ENCODE measurements at regions of chr6 and their contacts with region 1.

Region 1: DNA sequence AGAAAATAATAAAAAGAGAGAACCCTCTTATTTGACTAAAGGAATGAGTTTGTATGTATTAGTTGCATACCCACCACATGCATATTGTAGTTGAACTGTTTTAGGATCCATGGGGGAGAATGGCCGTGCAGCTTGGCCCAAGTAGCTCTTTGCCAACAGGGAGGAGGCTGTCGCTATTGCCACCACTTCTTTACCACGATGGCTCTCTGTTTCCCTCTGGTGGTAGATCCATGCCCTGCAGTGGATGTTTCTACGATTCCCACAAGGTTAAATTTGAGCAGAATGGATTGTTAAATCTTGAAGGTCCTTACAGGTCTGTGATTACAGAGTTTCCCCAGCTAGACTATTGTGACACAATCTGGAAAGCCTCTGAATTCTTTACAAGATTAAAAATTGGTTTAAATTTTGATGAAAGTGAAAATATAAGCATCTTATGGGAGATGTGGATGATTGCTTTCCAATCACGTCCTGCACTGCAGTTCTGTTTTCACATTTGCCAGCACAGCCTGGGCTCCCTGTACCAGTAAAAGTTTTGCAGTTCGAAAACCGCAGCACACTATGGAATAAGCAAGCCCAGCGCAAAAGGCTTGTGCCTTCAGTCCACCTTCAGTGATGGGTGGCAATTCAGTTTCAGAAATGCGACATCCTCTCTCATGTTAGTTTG is 34.4 kb upstream of the FNDC1 start:
- DNase-seq: peak; percentile 89
- ATAC-seq: peak; percentile 97
- H3K4me3 ChIP-seq: peak overlapping the region in 3 of 5 experiments; percentile 27 to 45 (median 28)
- H3K4me3 Mint-ChIP-seq: peak overlapping the region; percentile 66
- H3K27ac ChIP-seq: peak overlapping the region; percentile 39 to 42
- H3K27ac Mint-ChIP-seq: peak overlapping the region; percentile 76
- H3K4me1 ChIP-seq: peaks cover 12 to 16% of the 10 kb centered on the region in 2 donors
- H3K4me1 Mint-ChIP-seq: peaks cover 22% of the 10 kb centered on the region
- H3K27me3 ChIP-seq: no peaks in the 10 kb centered on the region
- H3K27me3 Mint-ChIP-seq: no peaks in the 10 kb centered on the region
- CTCF ChIP-seq: peak; percentile 98

Region 2: DNA sequence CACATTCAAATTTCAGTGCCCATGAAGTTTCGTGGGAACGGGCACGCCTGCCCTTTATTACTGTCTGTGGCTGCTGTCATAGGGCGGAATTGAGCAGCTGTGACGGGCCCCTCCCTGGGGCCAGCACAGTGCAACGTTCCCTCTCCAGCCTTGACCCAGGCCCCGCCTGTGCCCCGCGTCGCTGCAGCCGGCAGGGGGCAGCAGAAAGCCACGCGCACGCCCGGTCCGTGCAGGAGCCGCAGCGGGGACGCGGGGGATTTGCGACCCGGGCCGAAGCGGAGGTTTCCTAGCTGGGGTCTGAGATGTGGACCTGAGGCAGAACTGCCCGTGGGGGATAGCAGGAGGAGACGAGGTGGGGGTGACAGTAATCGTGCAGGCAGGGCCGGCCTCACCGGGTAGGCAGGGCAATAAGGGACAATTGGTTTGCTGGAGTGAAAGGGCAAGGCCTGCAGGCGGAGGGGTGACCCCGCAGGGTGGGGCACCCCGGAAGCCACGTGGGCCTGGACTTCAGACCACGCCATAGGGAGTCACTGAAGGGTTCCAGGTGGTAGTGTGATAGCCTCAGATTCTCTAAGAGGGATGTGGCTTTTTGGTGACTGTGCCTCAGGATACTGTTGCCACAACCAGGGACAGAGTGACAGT is 430.5 kb before region 1 on chr6:
- CTCF ChIA-PET with region 1: interaction called, 6 read pairs
- POLR2A ChIA-PET with region 1: no interaction called
- intact Hi-C with region 1: loop called (anchors 1 kb)
- DNase-seq: peak; percentile 90
- ATAC-seq: peak; percentile 98
- H3K4me3 ChIP-seq: peak overlapping the region in 4 of 5 experiments; percentile 33 to 59 (median 52)
- H3K4me3 Mint-ChIP-seq: peak overlapping the region; percentile 92
- H3K27ac ChIP-seq: peak overlapping the region in 1 of 2 donors; percentile 36
- H3K27ac Mint-ChIP-seq: peak overlapping the region; percentile 89
- H3K4me1 ChIP-seq: peaks cover 19 to 30% of the 10 kb centered on the region in 2 donors
- H3K4me1 Mint-ChIP-seq: peaks cover 27% of the 10 kb centered on the region
- H3K27me3 ChIP-seq: no peaks in the 10 kb centered on the region
- H3K27me3 Mint-ChIP-seq: no peaks in the 10 kb centered on the region
- CTCF ChIP-seq: peak; percentile 99

Region 3: DNA sequence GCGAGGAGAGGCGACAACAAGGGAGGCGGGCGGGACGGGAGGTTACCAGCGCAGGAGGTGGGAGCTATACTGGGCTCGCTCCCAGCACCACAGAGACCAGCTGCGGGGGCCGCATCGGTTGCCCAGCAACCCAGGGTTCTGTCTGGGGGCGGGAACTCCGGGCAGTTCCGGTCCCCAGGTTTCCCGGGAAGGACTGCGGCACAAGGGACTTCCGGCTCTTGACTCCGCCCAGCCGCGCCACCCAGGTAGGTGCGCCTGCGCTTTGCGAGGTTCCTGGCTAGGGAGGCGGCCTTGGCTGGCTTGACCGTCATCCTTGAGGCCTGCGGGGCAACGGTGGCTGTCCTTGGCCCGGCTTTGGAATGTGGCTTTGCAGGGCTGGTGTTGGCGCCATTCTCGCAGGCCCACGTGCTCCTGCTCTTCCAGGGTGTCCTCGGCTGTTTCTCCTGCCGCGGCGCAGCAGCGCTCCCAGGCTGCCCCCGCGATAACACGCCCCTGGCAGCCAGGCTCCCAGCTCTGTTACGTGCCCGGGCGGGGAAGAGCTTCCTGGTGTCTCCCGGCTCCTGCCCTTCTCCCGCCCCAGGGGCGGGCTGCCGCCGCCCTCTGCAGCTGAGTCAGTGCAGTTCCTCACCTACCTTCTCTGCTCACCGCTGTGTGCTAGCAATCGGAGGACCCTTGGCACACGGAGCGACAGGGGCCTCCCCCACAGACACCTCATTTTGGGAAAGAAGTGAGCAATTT is 135.0 kb before region 1 on chr6 and contains the start of gene RSPH3:
- CTCF ChIA-PET with region 1: interaction called, 728 read pairs
- POLR2A ChIA-PET with region 1: no interaction called
- intact Hi-C with region 1: no loop called
- DNase-seq: peak; percentile 90
- ATAC-seq: peak; percentile 94
- H3K4me3 ChIP-seq: peak within 1 kb of the TSS; percentile 51 to 95 (median 86)
- H3K4me3 Mint-ChIP-seq: peak within 1 kb of the TSS; percentile 97
- H3K27ac ChIP-seq: peak within 1 kb of the TSS; percentile 60 to 63
- H3K27ac Mint-ChIP-seq: peak within 1 kb of the TSS; percentile 93
- H3K4me1 ChIP-seq: peaks cover 11 to 17% of the 10 kb centered on the region in 2 donors
- H3K4me1 Mint-ChIP-seq: peaks cover 20% of the 10 kb centered on the region
- H3K27me3 ChIP-seq: no peaks in the 10 kb centered on the region
- H3K27me3 Mint-ChIP-seq: no peaks in the 10 kb centered on the region
- CTCF ChIP-seq: no peak
- total RNA-seq, gene RSPH3: 2.9 and 3.4 TPM in 2 replicates

Region 4: GRCh38 chr6:159008656-159009288 is 126.1 kb before region 1 on chr6:
- CTCF ChIA-PET with region 1: interaction called, 728 read pairs
- POLR2A ChIA-PET with region 1: interaction called, 12 read pairs
- intact Hi-C with region 1: loop called (anchors 1 kb)
- DNase-seq: peak; percentile 78
- ATAC-seq: peak; percentile 82
- H3K4me3 ChIP-seq: peak overlapping the region in 2 of 5 experiments; percentile 26 to 48
- H3K4me3 Mint-ChIP-seq: peak overlapping the region; percentile 38
- H3K27ac ChIP-seq: no peak overlapping the region
- H3K27ac Mint-ChIP-seq: peak overlapping the region; percentile 32
- H3K4me1 ChIP-seq: peaks cover 17 to 25% of the 10 kb centered on the region in 2 donors
- H3K4me1 Mint-ChIP-seq: peaks cover 39% of the 10 kb centered on the region
- H3K27me3 ChIP-seq: no peaks in the 10 kb centered on the region
- H3K27me3 Mint-ChIP-seq: no peaks in the 10 kb centered on the region
- CTCF ChIP-seq: peak; percentile 79

Region 5: GRCh38 chr6:159033160-159034049 is 101.4 kb before region 1 on chr6:
- CTCF ChIA-PET with region 1: interaction called, 164 read pairs
- POLR2A ChIA-PET with region 1: no interaction called
- intact Hi-C with region 1: no loop called
- DNase-seq: no peak
- ATAC-seq: peak; percentile 14
- H3K4me3 ChIP-seq: no peak overlapping the region
- H3K4me3 Mint-ChIP-seq: no peak overlapping the region
- H3K27ac ChIP-seq: peak overlapping the region in 1 of 2 donors; percentile 50
- H3K27ac Mint-ChIP-seq: peak overlapping the region; percentile 44
- H3K4me1 ChIP-seq: peaks cover 16 to 35% of the 10 kb centered on the region in 2 donors
- H3K4me1 Mint-ChIP-seq: peaks cover 28% of the 10 kb centered on the region
- H3K27me3 ChIP-seq: no peaks in the 10 kb centered on the region
- H3K27me3 Mint-ChIP-seq: no peaks in the 10 kb centered on the region
- CTCF ChIP-seq: no peak

Region 6: GRCh38 chr6:159084493-159085091 is 50.2 kb before region 1 on chr6:
- CTCF ChIA-PET with region 1: interaction called, 15 read pairs
- POLR2A ChIA-PET with region 1: no interaction called
- intact Hi-C with region 1: no loop called
- DNase-seq: no peak
- ATAC-seq: no peak
- H3K4me3 ChIP-seq: no peak overlapping the region
- H3K4me3 Mint-ChIP-seq: no peak overlapping the region
- H3K27ac ChIP-seq: no peak overlapping the region
- H3K27ac Mint-ChIP-seq: no peak overlapping the region
- H3K4me1 ChIP-seq: peaks cover 32 to 33% of the 10 kb centered on the region in 2 donors
- H3K4me1 Mint-ChIP-seq: peaks cover 27% of the 10 kb centered on the region
- H3K27me3 ChIP-seq: no peaks in the 10 kb centered on the region
- H3K27me3 Mint-ChIP-seq: no peaks in the 10 kb centered on the region
- CTCF ChIP-seq: no peak

Region 7: DNA sequence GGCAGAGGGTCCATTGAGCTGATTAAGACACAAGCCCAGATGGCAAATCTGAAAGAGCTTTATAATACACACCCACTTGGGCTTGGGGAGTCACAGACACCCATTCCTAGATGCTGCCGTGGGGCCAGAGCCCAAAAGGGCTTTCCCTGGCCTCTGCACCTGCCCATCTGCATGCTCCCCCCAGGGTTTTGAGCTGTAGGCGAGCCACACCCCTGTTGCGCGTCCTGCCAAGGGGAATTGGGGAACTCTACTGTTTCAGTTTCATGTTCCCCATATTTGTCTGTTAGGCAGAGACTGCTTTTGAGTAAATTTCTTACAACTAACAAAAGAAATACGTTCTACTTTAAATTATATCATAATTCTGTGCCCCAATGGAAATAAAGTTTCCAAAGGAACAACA is 18.5 kb before region 1 on chr6:
- CTCF ChIA-PET with region 1: interaction called, 1,002 read pairs
- POLR2A ChIA-PET with region 1: no interaction called
- intact Hi-C with region 1: loop called (anchors 2 kb)
- DNase-seq: peak; percentile 93
- ATAC-seq: peak; percentile 84
- H3K4me3 ChIP-seq: peak overlapping the region in 2 of 5 experiments; percentile 0 to 48
- H3K4me3 Mint-ChIP-seq: peak overlapping the region; percentile 88
- H3K27ac ChIP-seq: peak overlapping the region; percentile 99
- H3K27ac Mint-ChIP-seq: peak overlapping the region; percentile 95
- H3K4me1 ChIP-seq: peaks cover 86 to 87% of the 10 kb centered on the region in 2 donors
- H3K4me1 Mint-ChIP-seq: peaks cover 87% of the 10 kb centered on the region
- H3K27me3 ChIP-seq: no peaks in the 10 kb centered on the region
- H3K27me3 Mint-ChIP-seq: no peaks in the 10 kb centered on the region
- CTCF ChIP-seq: no peak

Region 8: DNA sequence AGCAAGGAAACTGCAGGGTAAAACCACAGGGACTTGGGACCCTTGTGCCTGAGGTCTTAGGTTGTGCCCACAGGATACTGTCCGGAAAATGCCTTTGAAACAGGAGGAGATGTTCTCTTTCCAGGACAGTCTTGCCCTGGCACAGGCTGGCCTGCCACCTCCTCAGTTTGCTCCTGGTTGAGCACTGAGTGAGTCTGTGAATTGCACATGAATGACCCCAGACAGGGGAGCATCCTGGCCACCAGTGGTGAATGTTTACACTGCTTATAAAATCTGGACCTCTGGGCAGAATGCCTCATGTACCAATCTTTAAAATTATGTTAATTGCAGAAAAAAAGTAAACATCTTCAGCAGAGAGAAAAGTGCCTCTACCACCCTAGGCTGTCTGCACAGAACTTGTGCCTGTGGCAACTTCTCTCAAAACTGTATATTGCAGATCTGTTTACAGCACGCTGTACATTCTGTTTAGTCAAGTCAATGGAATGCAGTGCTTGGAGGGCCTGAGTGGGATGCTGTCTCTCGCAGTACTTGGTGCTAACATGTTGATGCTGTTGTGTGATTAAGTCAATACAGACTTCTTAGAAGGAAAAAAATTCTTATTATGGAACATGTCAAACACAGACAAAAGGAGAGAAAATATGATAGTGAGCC is 316.1 kb after region 1 on chr6:
- CTCF ChIA-PET with region 1: no interaction called
- POLR2A ChIA-PET with region 1: no interaction called
- intact Hi-C with region 1: no loop called
- DNase-seq: no peak
- ATAC-seq: no peak
- H3K4me3 ChIP-seq: no peak overlapping the region
- H3K4me3 Mint-ChIP-seq: no peak overlapping the region
- H3K27ac ChIP-seq: no peak overlapping the region
- H3K27ac Mint-ChIP-seq: no peak overlapping the region
- H3K4me1 ChIP-seq: no peaks in the 10 kb centered on the region
- H3K4me1 Mint-ChIP-seq: no peaks in the 10 kb centered on the region
- H3K27me3 ChIP-seq: peaks cover 0 to 6% (median 0%) of the 10 kb centered on the region in 4 experiments
- H3K27me3 Mint-ChIP-seq: peaks cover 16% of the 10 kb centered on the region
- CTCF ChIP-seq: no peak

Measured in B cell (primary cell).